ENCODE measurements at regions of chr2 and their contacts with region 1.

Region 1: DNA sequence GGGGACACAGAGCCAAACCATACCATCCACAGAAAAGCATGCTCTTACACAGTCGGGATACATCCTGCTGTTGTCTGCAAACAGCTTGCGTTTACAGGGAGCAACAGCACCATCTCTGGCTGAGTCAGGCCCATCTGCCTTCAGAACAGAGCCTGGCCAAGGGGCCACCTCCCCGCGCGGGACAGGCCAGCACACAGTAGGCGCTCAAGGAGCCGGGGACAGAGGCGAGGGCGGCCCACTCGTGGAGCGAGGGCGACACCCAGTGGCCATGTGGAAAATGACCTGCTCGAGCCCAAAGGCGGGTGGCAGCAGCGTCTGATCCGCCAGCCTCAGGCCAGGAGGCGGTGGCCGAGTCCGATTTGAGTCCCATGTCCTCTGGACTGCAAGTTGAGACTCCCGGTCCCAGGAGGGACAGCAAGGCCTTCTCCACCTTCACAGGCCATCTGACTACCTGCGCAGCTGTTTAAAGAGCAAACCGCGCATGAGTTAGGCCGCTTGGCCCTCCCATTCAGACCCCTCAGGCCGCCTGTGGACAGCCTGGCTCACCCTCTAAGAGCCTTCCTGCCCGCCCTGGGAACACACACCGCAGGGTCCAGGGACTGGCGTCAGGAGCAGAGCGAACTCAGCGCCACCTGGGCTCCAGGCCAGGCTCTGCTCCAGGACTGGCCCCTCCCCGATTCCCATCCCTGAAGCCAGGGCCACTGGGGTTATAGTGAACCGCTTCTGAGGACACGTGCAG is 38.3 kb downstream of the TTC32 start:
- DNase-seq: peak; percentile 87
- CTCF ChIP-seq: peak; percentile 99

Region 2: DNA sequence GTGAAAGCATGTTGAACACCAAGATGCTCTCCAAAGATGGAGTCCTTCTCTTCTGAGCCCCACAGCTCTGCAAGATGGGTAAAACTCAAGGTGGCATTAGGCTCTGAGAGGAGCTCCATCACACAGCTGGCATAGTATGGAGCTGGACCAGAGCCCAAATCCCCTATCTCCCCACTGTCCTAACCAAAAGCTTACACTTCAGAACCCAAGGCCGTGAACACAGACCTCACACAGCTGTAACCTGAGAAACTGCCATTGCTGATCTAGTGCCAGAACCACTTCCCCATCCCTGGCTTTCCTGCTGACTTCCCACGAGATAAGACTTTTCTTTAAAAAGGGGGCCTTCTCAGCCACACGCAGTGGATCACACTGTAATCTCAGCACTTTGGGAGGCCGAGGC is 13.3 kb after region 1 on chr2:
- CTCF ChIA-PET with region 1: interaction called, 39 read pairs
- POLR2A ChIA-PET with region 1: no interaction called
- DNase-seq: no peak
- CTCF ChIP-seq: no peak

Region 3: DNA sequence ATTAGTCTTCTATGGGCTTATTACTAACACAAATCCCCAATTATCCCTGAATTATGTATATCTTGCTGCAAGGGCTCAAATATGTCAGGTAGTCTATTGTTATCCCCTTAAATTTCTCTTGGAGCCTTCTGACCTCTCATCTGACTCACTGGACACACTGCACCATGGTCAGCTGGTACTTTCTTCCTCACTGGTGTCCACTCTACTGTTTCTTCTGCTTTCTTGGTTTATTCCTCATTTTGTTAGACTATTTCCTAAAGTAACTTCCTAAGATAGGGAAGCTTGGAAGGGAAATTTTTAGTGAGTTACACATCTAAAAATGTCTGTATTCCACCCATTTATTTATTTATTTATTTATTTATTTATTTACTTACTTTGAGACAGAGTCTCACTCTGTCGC is 99.9 kb after region 1 on chr2:
- CTCF ChIA-PET with region 1: no interaction called
- POLR2A ChIA-PET with region 1: no interaction called
- DNase-seq: no peak
- CTCF ChIP-seq: no peak